Ascending aorta (tissue), 2 donors: ENCODE measurements at regions of chr3 and their contacts with region 1.

Region 1: DNA sequence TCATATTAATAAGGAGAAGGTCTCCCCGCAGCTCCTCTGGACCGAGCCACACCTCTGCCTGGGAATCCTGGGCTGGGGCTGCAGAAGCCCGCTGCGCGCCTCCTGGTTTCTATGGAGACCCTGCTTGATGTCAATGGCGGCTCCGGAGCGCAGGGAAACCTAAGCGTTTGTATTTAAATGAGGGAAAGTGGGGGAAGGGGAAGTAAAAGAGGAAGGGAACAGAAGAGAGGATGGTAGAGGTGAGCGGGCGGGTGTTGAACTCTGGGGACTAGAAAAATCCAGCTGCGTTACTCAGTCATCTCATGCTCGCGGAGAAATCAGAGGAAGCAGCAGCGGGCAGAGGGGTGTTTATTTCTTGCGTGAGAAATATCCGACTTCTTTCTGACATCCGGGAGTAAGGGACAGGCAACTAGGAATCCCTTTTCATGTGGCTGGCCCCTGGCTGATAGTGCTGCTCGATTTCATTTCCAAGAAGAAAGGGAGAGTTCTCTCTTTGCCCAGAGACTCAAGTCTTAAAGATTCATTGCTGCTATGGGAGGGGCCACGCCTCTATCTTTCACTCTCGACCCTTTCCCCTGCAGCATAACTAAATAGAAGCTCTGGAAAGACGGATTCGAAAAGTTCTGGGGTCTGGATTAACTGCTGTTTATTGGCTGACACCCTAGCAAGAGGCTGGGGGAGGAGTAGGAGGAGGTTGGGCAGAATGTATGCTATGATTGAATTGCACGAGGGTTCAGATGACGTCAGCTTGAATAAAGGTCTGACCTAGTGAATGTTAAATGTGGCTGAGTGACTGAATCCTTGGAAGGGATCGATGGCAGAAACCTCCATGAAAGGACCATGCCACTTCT is 110.5 kb upstream of the GAP43 start:
- DNase-seq: peak in 1 of 2 donors; percentile 61
- H3K4me3 ChIP-seq: peak overlapping the region; percentile 52 to 70
- H3K27ac ChIP-seq: peak overlapping the region; percentile 17 to 44
- H3K4me1 ChIP-seq: no peaks in the 10 kb centered on the region
- H3K27me3 ChIP-seq: no peaks in the 10 kb centered on the region
- CTCF ChIP-seq: no peak

Region 2: DNA sequence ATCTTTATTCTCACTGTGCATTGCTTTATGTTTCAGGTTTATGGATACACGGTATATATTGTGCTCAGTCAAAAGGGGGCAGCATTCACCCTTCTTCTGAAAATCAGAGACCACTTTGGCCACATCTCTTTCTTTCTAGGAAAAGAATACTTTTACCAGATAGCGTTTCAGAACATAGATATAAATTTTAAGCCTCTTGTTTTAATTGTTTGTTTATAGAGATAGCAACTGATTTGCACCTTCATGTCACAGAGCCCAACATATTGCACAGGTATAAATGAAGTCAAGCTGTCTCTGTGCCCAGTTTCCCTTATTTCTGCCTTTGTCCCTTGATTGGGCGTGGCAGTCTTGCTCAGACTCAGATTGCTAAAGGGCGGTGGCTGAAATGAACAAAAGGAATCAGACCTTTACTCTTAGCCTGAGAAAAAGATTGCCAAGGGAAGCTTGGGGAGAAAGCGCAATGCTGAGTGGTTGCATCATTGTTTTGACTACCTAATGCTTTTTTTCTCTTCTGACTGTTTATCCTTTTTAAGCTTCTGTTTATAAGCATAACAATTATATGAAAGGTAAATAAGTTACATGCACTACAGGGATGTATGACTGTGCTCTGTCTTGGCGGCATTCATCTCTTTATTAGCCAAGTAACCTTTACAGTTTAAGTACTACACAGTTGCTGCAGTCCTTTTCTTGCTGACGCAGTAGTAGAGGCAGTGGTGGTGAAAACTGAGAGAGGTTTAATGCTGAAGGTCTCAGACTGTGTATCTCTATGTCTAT is 294.9 kb before region 1 on chr3:
- intact Hi-C with region 1: loop called (anchors 10 kb)
- DNase-seq: no peak
- H3K4me3 ChIP-seq: peak overlapping the region in 1 of 2 donors; percentile 28
- H3K27ac ChIP-seq: no peak overlapping the region
- H3K4me1 ChIP-seq: peaks cover 2 to 4% of the 10 kb centered on the region in 2 donors
- H3K27me3 ChIP-seq: no peaks in the 10 kb centered on the region
- CTCF ChIP-seq: peak; percentile 56 to 74 (median 62)

Region 3: GRCh38 chr3:115279939-115280338 is 232.9 kb before region 1 on chr3:
- intact Hi-C with region 1: loop called (anchors 5 kb)
- DNase-seq: no peak
- H3K4me3 ChIP-seq: no peak overlapping the region
- H3K27ac ChIP-seq: peak overlapping the region; percentile 61 to 63
- H3K4me1 ChIP-seq: peaks cover 0 to 18% of the 10 kb centered on the region in 2 donors
- H3K27me3 ChIP-seq: no peaks in the 10 kb centered on the region
- CTCF ChIP-seq: no peak

Region 4: DNA sequence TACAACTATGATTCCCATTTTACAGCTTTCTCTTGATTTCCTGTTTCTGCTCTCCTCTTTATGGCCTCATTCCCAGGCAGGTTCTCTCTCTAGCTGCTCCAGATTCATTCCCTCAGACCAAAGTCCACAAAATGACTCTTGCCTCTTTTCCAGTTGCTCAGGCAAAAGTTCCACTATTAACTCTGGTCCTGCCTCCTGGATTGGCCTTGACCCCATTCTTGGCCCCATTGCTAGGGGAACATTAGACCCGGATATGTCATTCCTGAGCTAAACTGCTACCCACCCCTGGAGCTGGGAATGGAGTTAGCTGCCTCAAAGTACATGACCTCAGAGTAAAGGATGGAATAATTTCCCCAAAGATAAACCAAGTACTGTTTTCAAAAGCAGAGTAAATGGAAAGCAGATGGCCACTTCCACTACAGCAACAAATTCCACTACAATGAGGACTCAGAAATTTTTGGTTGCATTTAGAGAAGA is 37.5 kb after region 1 on chr3:
- intact Hi-C with region 1: no loop called
- DNase-seq: peak in 1 of 2 donors; percentile 66
- H3K4me3 ChIP-seq: no peak overlapping the region
- H3K27ac ChIP-seq: peak overlapping the region; percentile 44 to 47
- H3K4me1 ChIP-seq: peaks cover 0 to 11% of the 10 kb centered on the region in 2 donors
- H3K27me3 ChIP-seq: no peaks in the 10 kb centered on the region
- CTCF ChIP-seq: no peak

Region 5: DNA sequence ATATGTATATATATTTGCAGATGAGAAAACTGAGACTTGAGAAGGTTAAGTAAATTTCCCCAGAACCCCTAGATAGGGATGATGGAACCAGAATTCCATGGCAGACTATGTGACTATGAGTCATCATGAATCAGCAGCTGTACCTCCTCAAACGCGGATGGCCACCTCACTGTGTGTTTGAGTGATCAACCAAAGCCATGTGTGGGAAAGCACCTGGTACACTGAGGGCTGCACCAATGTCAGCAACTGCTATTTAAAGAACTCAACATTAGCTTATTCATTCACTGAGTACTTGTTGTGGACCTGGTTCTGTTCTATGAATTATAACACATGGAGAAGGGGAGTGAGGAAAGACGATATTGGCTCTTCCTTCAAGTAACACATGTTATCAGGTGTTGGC is 487.5 kb after region 1 on chr3:
- intact Hi-C with region 1: no loop called
- DNase-seq: no peak
- H3K4me3 ChIP-seq: no peak overlapping the region
- H3K27ac ChIP-seq: no peak overlapping the region
- H3K4me1 ChIP-seq: no peaks in the 10 kb centered on the region
- H3K27me3 ChIP-seq: no peaks in the 10 kb centered on the region
- CTCF ChIP-seq: no peak

Region 6: GRCh38 chr3:116980099-116980498 is 1467.3 kb after region 1 on chr3:
- intact Hi-C with region 1: no loop called
- DNase-seq: no peak
- H3K4me3 ChIP-seq: no peak overlapping the region
- H3K27ac ChIP-seq: no peak overlapping the region
- H3K4me1 ChIP-seq: no peaks in the 10 kb centered on the region
- H3K27me3 ChIP-seq: no peaks in the 10 kb centered on the region
- CTCF ChIP-seq: no peak